A549 (cell line): ENCODE measurements at regions of chr3 and their contacts with region 1.

Region 1: DNA sequence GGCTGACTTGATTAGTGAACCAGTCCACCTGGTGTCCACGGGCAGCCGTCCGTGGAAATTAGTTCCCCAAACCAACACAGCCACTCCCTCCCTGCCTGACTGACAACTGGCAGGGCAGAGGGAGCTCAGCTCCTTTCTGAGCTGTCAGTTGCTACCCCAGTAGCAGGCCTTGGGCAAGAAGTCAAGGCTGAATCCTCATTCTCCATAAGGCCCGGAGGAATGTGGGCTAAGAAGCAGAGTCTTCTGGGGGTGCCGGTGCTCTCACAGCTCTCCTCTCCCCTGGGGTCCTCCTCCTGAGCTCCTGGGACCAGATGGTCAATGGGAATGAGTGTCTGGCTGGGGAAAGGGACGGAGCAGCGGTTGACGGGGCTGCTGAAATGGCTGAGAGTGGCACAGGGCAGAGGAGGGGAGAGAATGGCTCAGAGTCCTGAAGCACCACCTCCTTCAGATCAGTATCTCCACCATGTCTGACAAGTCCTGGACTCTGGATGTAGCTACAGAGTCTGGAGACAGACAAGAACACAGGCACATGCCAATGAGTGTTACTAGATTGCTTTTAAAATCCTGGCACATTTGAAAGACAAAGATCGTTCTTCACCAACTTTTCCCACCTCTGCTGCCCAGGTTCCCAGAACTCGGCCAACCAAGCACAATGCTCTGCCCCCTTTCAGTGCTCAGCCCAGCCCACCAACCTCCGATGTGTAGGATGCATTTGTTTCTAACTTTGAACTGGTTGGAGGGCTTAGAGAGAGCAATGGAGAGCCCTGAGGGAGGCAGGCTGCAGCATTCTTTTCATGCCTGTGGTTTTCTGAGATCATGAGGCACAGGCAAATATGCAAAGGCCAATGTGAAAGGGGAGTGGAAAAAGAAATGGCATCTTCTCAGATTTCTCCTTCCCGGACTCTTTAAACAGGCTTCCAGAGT is 16.7 kb downstream of the AMOTL2 start:
- DNase-seq: peak in 1 of 2 experiments; percentile 82
- ATAC-seq: peak; percentile 35 to 73; a peak in 5 of 6 replicates
- H3K4me3 ChIP-seq: no peak overlapping the region; the same call in 2 of the 3 replicates
- H3K27ac ChIP-seq: peak overlapping the region; percentile 99 to 100
- H3K4me1 ChIP-seq: peaks cover 100% of the 10 kb centered on the region
- CTCF ChIP-seq: no peak
- EP300 ChIP-seq: peak in 1 of 2 experiments; percentile 60; a peak in 2 of 5 replicates
- POLR2A ChIP-seq: no peak
- RAD21 ChIP-seq: peak in 1 of 2 experiments; percentile 5; a peak in 1 of 5 replicates

Region 2: DNA sequence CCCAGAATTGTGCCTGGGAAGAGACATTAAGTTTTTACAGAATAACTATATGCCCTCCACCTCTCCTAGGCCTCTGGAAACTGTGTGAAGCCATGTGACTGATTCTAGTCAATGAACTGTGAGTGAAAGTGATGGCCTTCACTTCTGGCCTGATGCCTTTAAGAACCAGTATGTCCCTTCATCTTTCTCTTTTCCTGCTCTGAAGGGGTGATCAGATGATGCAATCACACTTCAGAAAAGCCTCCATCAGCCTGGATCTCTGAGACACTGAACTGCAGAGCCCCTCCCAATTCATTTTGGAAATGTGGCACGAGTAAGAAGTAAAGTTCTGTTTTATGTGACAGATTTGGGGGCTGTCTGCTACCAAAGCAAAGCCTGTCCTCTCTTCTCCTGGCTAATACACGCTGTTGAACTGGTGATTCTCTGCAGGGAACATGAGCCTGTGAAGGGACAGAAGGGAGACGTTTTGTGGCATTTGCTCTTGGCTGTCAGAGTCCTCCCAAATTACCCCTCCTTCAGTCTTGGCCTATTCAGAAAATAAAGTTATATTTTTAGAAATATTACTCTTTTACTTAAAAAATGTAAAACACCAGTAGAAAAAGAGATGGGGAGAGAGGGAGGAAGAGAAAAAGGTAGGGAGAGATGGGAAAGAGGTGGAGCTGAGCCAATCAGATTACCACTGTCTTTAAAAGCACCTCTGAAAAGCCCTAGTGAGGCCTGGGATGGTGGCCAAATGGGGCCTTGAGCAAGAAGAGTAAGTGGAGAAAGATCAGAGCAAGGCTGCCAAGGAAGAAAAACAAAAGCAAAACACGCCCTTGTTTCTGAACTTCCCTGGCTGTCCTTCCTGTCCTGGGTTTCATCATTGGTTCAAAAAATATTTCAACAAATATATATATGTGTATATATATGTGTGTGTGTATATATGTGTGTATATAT is 65.9 kb before region 1 on chr3:
- CTCF ChIA-PET with region 1: no interaction called
- POLR2A ChIA-PET with region 1: no interaction called
- DNase-seq: peak in 1 of 2 experiments; percentile 29
- ATAC-seq: peak in 1 of 2 experiments; percentile 36; a peak in 1 of 6 replicates
- H3K4me3 ChIP-seq: no peak overlapping the region
- H3K27ac ChIP-seq: peak overlapping the region; percentile 4 to 58; a peak in 3 of 6 replicates
- H3K4me1 ChIP-seq: peaks cover 7% of the 10 kb centered on the region; the same call in 1 of the 3 replicates
- CTCF ChIP-seq: no peak
- EP300 ChIP-seq: no peak
- POLR2A ChIP-seq: no peak
- RAD21 ChIP-seq: no peak

Region 3: GRCh38 chr3:134326760-134327593 is 30.5 kb before region 1 on chr3:
- CTCF ChIA-PET with region 1: interaction called, 16 read pairs
- POLR2A ChIA-PET with region 1: interaction called, 27 read pairs
- DNase-seq: peak in 1 of 2 experiments; percentile 94
- ATAC-seq: peak; percentile 82 to 85
- H3K4me3 ChIP-seq: peak overlapping the region; percentile 26
- H3K27ac ChIP-seq: peak overlapping the region; percentile 96 to 100
- H3K4me1 ChIP-seq: peaks cover 76% of the 10 kb centered on the region
- CTCF ChIP-seq: no peak
- EP300 ChIP-seq: peak; percentile 94 to 99; a peak in 4 of 5 replicates
- POLR2A ChIP-seq: no peak
- RAD21 ChIP-seq: peak; percentile 30 to 56; a peak in 3 of 5 replicates

Region 4: DNA sequence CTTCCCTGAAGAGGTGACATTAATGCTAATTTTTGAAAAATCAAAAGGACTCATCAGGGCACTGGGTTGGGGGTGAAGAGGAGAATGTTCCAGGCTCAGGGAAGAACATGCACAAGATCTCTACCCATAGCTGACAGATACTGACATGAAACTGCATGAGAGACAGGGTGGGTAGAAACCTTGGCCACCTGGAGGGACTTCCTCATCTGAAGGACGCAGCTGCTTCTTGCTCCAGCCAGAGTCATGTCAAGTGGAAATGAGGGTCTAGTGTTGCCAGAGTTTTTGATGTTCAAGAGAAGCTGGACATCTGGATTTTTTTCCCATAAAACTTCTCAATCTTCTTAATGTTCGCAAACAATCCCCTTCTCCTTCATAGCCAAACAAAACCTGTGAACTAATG is 13.0 kb before region 1 on chr3:
- CTCF ChIA-PET with region 1: interaction called, 11 read pairs
- POLR2A ChIA-PET with region 1: no interaction called
- DNase-seq: no peak
- ATAC-seq: no peak
- H3K4me3 ChIP-seq: no peak overlapping the region
- H3K27ac ChIP-seq: peak overlapping the region in 1 of 2 experiments; percentile 51; a peak in 1 of 6 replicates
- H3K4me1 ChIP-seq: peaks cover 16% of the 10 kb centered on the region
- CTCF ChIP-seq: no peak
- EP300 ChIP-seq: no peak
- POLR2A ChIP-seq: no peak
- RAD21 ChIP-seq: no peak

Region 5: DNA sequence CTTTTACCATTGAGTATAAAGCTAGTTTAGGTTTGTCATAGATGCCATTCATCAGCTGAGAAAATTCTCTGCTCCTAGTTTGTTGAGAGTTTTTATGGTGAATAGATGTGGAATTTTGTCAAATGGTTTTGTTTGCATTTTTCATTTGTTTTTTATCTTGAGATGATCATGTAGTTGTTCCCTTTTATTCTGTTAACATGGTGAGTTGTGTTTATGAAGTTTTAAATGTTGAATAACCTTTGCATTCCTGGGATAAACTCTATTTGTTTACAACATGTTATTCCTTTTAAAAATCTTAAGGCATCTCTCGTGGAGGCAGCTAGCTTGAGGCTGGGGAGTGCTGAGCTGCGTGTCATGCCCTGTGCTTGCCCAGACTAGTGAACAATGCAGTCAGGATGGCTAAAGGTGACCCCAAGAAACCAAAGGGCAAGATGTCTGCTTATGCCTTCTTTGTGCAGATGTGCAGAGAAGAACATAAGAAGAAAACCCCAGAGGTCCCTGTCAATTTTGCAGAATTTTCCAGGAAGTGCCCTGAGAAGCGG is 79.8 kb after region 1 on chr3:
- CTCF ChIA-PET with region 1: no interaction called
- POLR2A ChIA-PET with region 1: no interaction called
- DNase-seq: no peak
- ATAC-seq: no peak
- H3K4me3 ChIP-seq: no peak overlapping the region
- H3K27ac ChIP-seq: no peak overlapping the region
- H3K4me1 ChIP-seq: 0 out of 3 replicates have a peak, but pooled peaks cover 9% of the 10 kb centered on the region
- CTCF ChIP-seq: no peak
- EP300 ChIP-seq: no peak
- POLR2A ChIP-seq: no peak
- RAD21 ChIP-seq: no peak